ENCODE measurements at regions of chr10 and their contacts with region 1.

Region 1: GRCh38 chr10:32367793-32368453 is 21.0 kb upstream of the EPC1 start:
- DNase-seq: peak; percentile 68 to 89
- H3K4me3 ChIP-seq: no peak overlapping the region
- H3K27ac ChIP-seq: peak overlapping the region in 3 of 5 donors; percentile 6 to 26 (median 7)
- H3K4me1 ChIP-seq: peaks cover 3 to 63% (median 34%) of the 10 kb centered on the region in 4 donors
- H3K27me3 ChIP-seq: no peaks in the 10 kb centered on the region
- CTCF ChIP-seq: peak in 5 of 7 experiments; percentile 53 to 82 (median 74)
- EP300 ChIP-seq: no peak
- POLR2A ChIP-seq: no peak

Region 2: DNA sequence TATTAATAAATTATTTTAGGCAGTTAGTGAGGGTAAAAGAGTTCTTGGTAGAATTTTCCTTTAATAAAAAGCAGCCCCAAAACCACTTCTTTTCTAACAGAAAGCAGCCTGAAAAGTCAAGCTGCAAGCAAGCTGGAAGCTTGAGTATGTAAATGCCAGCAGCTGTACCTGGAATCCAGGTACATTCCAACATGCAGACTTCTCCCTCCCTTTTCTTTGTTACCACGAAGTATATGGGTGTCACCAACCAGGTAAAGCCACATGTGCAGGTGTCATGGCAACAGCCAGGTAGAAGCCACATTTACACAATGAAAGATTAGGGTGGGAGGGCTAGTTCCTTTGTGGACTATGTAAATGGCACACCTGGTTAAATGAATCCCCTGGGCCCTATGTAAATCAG is 135.5 kb before region 1 on chr10:
- intact Hi-C with region 1: no loop called
- DNase-seq: peak in 1 of 2 donors; percentile 81
- H3K4me3 ChIP-seq: no peak overlapping the region
- H3K27ac ChIP-seq: no peak overlapping the region
- H3K4me1 ChIP-seq: no peaks in the 10 kb centered on the region
- H3K27me3 ChIP-seq: no peaks in the 10 kb centered on the region
- CTCF ChIP-seq: no peak
- EP300 ChIP-seq: no peak
- POLR2A ChIP-seq: no peak

Region 3: DNA sequence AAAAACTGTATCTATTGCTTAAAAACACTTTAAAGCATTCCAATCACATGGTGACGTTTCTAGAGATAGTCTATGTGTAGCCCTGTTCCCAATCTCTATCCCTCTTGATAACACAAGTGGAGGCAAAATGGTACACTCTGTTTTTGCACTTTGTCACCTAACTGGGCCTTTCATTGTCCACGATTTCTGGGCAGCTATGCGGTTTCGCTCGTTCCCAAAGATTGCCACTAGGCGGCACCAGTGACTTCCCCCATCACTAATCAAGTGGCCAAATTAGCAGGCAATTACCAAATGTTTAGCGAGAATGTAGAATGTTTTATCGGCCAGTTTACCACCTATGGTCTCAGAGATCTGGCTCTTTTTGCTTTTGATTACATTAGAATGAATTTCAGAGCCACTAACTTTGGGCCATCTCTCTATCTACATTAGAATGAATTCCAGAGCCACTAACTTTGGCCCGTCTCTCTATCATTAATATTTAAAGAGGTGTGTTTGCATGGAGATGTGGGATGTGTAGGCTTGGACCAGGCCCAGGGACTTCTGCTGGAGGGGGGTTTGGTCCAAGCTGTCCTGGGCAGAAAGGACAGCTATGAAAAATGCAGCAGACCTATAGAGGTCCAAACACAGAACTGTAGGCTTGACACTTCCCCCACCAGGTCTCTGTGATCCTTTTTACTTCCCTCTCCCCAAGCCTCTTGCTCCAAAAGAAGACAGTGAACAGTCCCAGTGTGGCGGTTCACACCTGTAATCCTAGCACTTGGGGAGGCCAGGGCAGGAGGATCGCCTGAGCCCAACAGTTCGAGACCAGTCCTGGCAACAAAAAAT is 111.1 kb before region 1 on chr10:
- intact Hi-C with region 1: loop called (anchors 10 kb)
- DNase-seq: peak; percentile 80 to 83
- H3K4me3 ChIP-seq: peak overlapping the region in 1 of 4 donors; percentile 5
- H3K27ac ChIP-seq: no peak overlapping the region
- H3K4me1 ChIP-seq: peaks cover 0 to 8% (median 5%) of the 10 kb centered on the region in 4 donors
- H3K27me3 ChIP-seq: no peaks in the 10 kb centered on the region
- CTCF ChIP-seq: peak in 5 of 7 experiments; percentile 65 to 85 (median 81)
- EP300 ChIP-seq: no peak
- POLR2A ChIP-seq: no peak